PC-3 (cell line): ENCODE measurements at regions of chr9 and their contacts with region 1.

Region 1: GRCh38 chr9:38047301-38048251 is 21.5 kb downstream of the SHB start:
- DNase-seq: peak; percentile 96
- ATAC-seq: peak; percentile 81
- H3K4me3 ChIP-seq: peak overlapping the region; percentile 58
- H3K27ac ChIP-seq: peak overlapping the region; percentile 99
- H3K4me1 ChIP-seq: peaks cover 52% of the 10 kb centered on the region
- H3K27me3 ChIP-seq: no peaks in the 10 kb centered on the region
- CTCF ChIP-seq: no peak

Region 2: GRCh38 chr9:37953775-37954437 is 93.7 kb before region 1 on chr9:
- CTCF ChIA-PET with region 1: no interaction called
- POLR2A ChIA-PET with region 1: no interaction called
- intact Hi-C with region 1: loop called (anchors 1 kb)
- DNase-seq: peak; percentile 96
- ATAC-seq: peak; percentile 82
- H3K4me3 ChIP-seq: no peak overlapping the region
- H3K27ac ChIP-seq: peak overlapping the region; percentile 100
- H3K4me1 ChIP-seq: peaks cover 41% of the 10 kb centered on the region
- H3K27me3 ChIP-seq: no peaks in the 10 kb centered on the region
- CTCF ChIP-seq: no peak

Region 3: GRCh38 chr9:38008168-38009034 is 39.2 kb before region 1 on chr9:
- CTCF ChIA-PET with region 1: no interaction called
- POLR2A ChIA-PET with region 1: no interaction called
- intact Hi-C with region 1: loop called (anchors 5 kb)
- DNase-seq: peak; percentile 94
- ATAC-seq: peak; percentile 84
- H3K4me3 ChIP-seq: no peak overlapping the region
- H3K27ac ChIP-seq: peak overlapping the region; percentile 99
- H3K4me1 ChIP-seq: peaks cover 57% of the 10 kb centered on the region
- H3K27me3 ChIP-seq: no peaks in the 10 kb centered on the region
- CTCF ChIP-seq: no peak

Region 4: GRCh38 chr9:38017149-38017884 is 30.3 kb before region 1 on chr9:
- CTCF ChIA-PET with region 1: no interaction called
- POLR2A ChIA-PET with region 1: no interaction called
- intact Hi-C with region 1: loop called (anchors 1 kb)
- DNase-seq: peak; percentile 60
- ATAC-seq: peak; percentile 43
- H3K4me3 ChIP-seq: peak overlapping the region; percentile 11; the same call in 1 of the 2 replicates
- H3K27ac ChIP-seq: peak overlapping the region; percentile 97
- H3K4me1 ChIP-seq: peaks cover 62% of the 10 kb centered on the region
- H3K27me3 ChIP-seq: no peaks in the 10 kb centered on the region
- CTCF ChIP-seq: peak; percentile 55

Region 5: GRCh38 chr9:38032266-38033110 is 15.1 kb before region 1 on chr9:
- CTCF ChIA-PET with region 1: no interaction called
- POLR2A ChIA-PET with region 1: no interaction called
- intact Hi-C with region 1: loop called (anchors 2 kb)
- DNase-seq: peak; percentile 79
- ATAC-seq: peak; percentile 61
- H3K4me3 ChIP-seq: peak overlapping the region; percentile 31; the same call in 1 of the 2 replicates
- H3K27ac ChIP-seq: peak overlapping the region; percentile 75
- H3K4me1 ChIP-seq: peaks cover 69% of the 10 kb centered on the region
- H3K27me3 ChIP-seq: no peaks in the 10 kb centered on the region
- CTCF ChIP-seq: no peak

Region 6: GRCh38 chr9:38068866-38069629 is 21.5 kb after region 1 on chr9 and contains the start of gene SHB:
- CTCF ChIA-PET with region 1: no interaction called
- POLR2A ChIA-PET with region 1: interaction called, 5 read pairs
- intact Hi-C with region 1: loop called (anchors 1 kb)
- DNase-seq: peak; percentile 59
- ATAC-seq: peak; percentile 41
- H3K4me3 ChIP-seq: peak within 1 kb of the TSS; percentile 95
- H3K27ac ChIP-seq: peak within 1 kb of the TSS; percentile 77
- H3K4me1 ChIP-seq: peaks cover 34% of the 10 kb centered on the region
- H3K27me3 ChIP-seq: no peaks in the 10 kb centered on the region
- CTCF ChIP-seq: 0 out of 2 replicates have a peak, but pooled peaks have one; percentile 17
- total RNA-seq, gene SHB: 56.4 and 77.1 TPM in 2 replicates